B cell (primary cell): ENCODE measurements at regions of chr6 and their contacts with region 1.

Region 1: GRCh38 chr6:6588064-6588923 is at the start of gene LY86:
- DNase-seq: peak; percentile 87
- ATAC-seq: peak; percentile 65
- H3K4me3 ChIP-seq: peak within 1 kb of the TSS; percentile 52 to 84 (median 81)
- H3K4me3 Mint-ChIP-seq: peak within 1 kb of the TSS; percentile 98
- H3K27ac ChIP-seq: peak within 1 kb of the TSS; percentile 88 to 91
- H3K27ac Mint-ChIP-seq: peak within 1 kb of the TSS; percentile 99
- H3K4me1 ChIP-seq: peaks cover 83 to 85% of the 10 kb centered on the region in 2 donors
- H3K4me1 Mint-ChIP-seq: peaks cover 93% of the 10 kb centered on the region
- H3K27me3 ChIP-seq: no peaks in the 10 kb centered on the region
- H3K27me3 Mint-ChIP-seq: no peaks in the 10 kb centered on the region
- CTCF ChIP-seq: peak; percentile 16
- total RNA-seq, gene LY86: 68.7 and 76.7 TPM in 2 replicates

Region 2: GRCh38 chr6:5723841-5724691 is 864.2 kb before region 1 on chr6:
- CTCF ChIA-PET with region 1: no interaction called
- POLR2A ChIA-PET with region 1: no interaction called
- intact Hi-C with region 1: loop called (anchors 10 kb)
- DNase-seq: peak; percentile 92
- ATAC-seq: peak; percentile 89
- H3K4me3 ChIP-seq: peak overlapping the region; percentile 56 to 79 (median 75)
- H3K4me3 Mint-ChIP-seq: peak overlapping the region; percentile 99
- H3K27ac ChIP-seq: peak overlapping the region; percentile 98 to 99
- H3K27ac Mint-ChIP-seq: peak overlapping the region; percentile 100
- H3K4me1 ChIP-seq: peaks cover 59 to 75% of the 10 kb centered on the region in 2 donors
- H3K4me1 Mint-ChIP-seq: peaks cover 76% of the 10 kb centered on the region
- H3K27me3 ChIP-seq: no peaks in the 10 kb centered on the region
- H3K27me3 Mint-ChIP-seq: no peaks in the 10 kb centered on the region
- CTCF ChIP-seq: no peak

Region 3: GRCh38 chr6:6390849-6391602 is 197.3 kb before region 1 on chr6:
- CTCF ChIA-PET with region 1: interaction called, 3 read pairs
- POLR2A ChIA-PET with region 1: interaction called, 6 read pairs
- intact Hi-C with region 1: loop called (anchors 1 kb)
- DNase-seq: peak; percentile 81
- ATAC-seq: peak; percentile 75
- H3K4me3 ChIP-seq: peak overlapping the region in 3 of 5 experiments; percentile 3 to 36 (median 26)
- H3K4me3 Mint-ChIP-seq: peak overlapping the region; percentile 87
- H3K27ac ChIP-seq: peak overlapping the region; percentile 83 to 92
- H3K27ac Mint-ChIP-seq: peak overlapping the region; percentile 97
- H3K4me1 ChIP-seq: peaks cover 37 to 44% of the 10 kb centered on the region in 2 donors
- H3K4me1 Mint-ChIP-seq: peaks cover 58% of the 10 kb centered on the region
- H3K27me3 ChIP-seq: no peaks in the 10 kb centered on the region
- H3K27me3 Mint-ChIP-seq: peaks cover 3% of the 10 kb centered on the region
- CTCF ChIP-seq: no peak

Region 4: DNA sequence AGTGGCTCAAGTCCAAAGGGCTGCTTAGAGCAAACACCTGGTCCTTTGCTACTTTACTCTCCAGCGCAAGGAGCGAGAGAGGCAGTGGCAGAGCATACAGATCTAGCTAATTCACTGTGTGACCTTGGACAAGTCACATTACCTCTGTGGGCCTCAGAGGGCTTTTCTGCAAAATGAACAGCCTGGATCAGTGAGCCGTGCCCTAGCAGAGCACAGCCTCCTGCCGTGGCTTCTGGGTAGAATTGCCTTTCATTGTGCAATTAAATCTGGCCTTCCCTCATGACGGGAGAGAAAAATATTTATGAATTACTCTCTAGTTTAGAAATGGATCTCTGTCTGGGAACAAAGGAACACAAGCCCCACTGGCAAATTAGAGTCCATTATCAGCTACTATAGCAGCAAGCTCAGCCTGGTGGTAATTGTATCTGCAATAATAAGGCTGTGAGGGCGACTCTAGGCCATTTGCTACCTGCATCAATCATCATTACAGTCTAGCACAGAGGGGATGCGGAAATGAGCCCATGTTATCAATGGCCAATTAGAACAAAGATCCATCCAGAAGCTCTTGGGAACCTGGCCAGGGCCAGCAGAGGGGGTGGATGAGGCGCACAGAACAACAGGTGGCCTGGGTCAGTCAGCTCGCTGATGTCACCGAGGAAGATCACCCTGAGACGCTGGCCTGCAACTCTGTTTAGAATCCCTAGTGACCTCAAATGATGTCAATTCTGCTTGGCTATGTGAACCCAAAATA is 113.9 kb before region 1 on chr6:
- CTCF ChIA-PET with region 1: no interaction called
- POLR2A ChIA-PET with region 1: no interaction called
- intact Hi-C with region 1: no loop called
- DNase-seq: no peak
- ATAC-seq: no peak
- H3K4me3 ChIP-seq: no peak overlapping the region
- H3K4me3 Mint-ChIP-seq: no peak overlapping the region
- H3K27ac ChIP-seq: no peak overlapping the region
- H3K27ac Mint-ChIP-seq: no peak overlapping the region
- H3K4me1 ChIP-seq: no peaks in the 10 kb centered on the region
- H3K4me1 Mint-ChIP-seq: no peaks in the 10 kb centered on the region
- H3K27me3 ChIP-seq: no peaks in the 10 kb centered on the region
- H3K27me3 Mint-ChIP-seq: peaks cover 7% of the 10 kb centered on the region
- CTCF ChIP-seq: no peak

Region 5: GRCh38 chr6:6556738-6557505 is 31.4 kb before region 1 on chr6:
- CTCF ChIA-PET with region 1: interaction called, 171 read pairs
- POLR2A ChIA-PET with region 1: no interaction called
- intact Hi-C with region 1: loop called (anchors 1 kb)
- DNase-seq: peak; percentile 70
- ATAC-seq: peak; percentile 76
- H3K4me3 ChIP-seq: no peak overlapping the region
- H3K4me3 Mint-ChIP-seq: no peak overlapping the region
- H3K27ac ChIP-seq: no peak overlapping the region
- H3K27ac Mint-ChIP-seq: no peak overlapping the region
- H3K4me1 ChIP-seq: no peaks in the 10 kb centered on the region
- H3K4me1 Mint-ChIP-seq: no peaks in the 10 kb centered on the region
- H3K27me3 ChIP-seq: no peaks in the 10 kb centered on the region
- H3K27me3 Mint-ChIP-seq: no peaks in the 10 kb centered on the region
- CTCF ChIP-seq: peak; percentile 94

Region 6: GRCh38 chr6:6622501-6622900 is 34.2 kb after region 1 on chr6:
- CTCF ChIA-PET with region 1: interaction called, 3 read pairs
- POLR2A ChIA-PET with region 1: interaction called, 3 read pairs
- intact Hi-C with region 1: loop called (anchors 5 kb)
- DNase-seq: no peak
- ATAC-seq: no peak
- H3K4me3 ChIP-seq: no peak overlapping the region
- H3K4me3 Mint-ChIP-seq: no peak overlapping the region
- H3K27ac ChIP-seq: no peak overlapping the region
- H3K27ac Mint-ChIP-seq: no peak overlapping the region
- H3K4me1 ChIP-seq: peaks cover 17 to 25% of the 10 kb centered on the region in 2 donors
- H3K4me1 Mint-ChIP-seq: peaks cover 68% of the 10 kb centered on the region
- H3K27me3 ChIP-seq: no peaks in the 10 kb centered on the region
- H3K27me3 Mint-ChIP-seq: no peaks in the 10 kb centered on the region
- CTCF ChIP-seq: no peak

Region 7: DNA sequence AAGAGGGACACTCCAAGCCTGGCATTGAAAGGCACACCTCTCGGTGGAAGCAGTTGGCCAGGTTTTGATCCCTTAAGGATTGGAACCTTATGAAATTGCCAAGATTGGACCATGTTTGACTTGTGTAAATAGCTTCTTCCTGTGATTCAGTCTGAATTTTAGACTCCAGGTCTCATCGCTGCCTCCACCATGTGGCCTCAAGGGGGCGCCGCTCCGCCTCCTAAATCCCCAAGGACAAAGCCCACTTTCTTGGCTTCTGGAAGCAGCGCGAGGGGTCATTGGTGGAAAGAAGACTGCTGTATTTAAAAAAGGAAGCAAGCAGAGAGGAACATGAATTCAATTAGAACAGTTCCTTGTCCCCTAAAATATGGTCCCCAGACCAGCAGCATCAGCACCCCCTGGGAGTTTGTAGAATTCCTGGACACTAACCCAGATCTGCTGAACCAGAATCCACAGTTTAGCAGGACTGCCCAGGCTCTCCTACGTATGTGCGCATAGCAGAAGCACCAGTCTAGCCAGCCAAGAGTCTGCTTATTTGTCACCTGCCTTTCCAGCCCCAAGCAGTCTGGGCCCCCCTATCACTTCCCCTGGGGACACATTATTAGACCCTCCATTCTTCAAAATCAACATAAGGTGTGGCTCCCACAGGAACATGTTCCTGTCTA is 108.7 kb after region 1 on chr6:
- CTCF ChIA-PET with region 1: no interaction called
- POLR2A ChIA-PET with region 1: no interaction called
- intact Hi-C with region 1: no loop called
- DNase-seq: peak; percentile 31
- ATAC-seq: no peak
- H3K4me3 ChIP-seq: no peak overlapping the region
- H3K4me3 Mint-ChIP-seq: no peak overlapping the region
- H3K27ac ChIP-seq: no peak overlapping the region
- H3K27ac Mint-ChIP-seq: no peak overlapping the region
- H3K4me1 ChIP-seq: no peaks in the 10 kb centered on the region
- H3K4me1 Mint-ChIP-seq: no peaks in the 10 kb centered on the region
- H3K27me3 ChIP-seq: peaks cover 0 to 5% (median 0%) of the 10 kb centered on the region in 4 experiments
- H3K27me3 Mint-ChIP-seq: peaks cover 36% of the 10 kb centered on the region
- CTCF ChIP-seq: peak; percentile 35

Region 8: DNA sequence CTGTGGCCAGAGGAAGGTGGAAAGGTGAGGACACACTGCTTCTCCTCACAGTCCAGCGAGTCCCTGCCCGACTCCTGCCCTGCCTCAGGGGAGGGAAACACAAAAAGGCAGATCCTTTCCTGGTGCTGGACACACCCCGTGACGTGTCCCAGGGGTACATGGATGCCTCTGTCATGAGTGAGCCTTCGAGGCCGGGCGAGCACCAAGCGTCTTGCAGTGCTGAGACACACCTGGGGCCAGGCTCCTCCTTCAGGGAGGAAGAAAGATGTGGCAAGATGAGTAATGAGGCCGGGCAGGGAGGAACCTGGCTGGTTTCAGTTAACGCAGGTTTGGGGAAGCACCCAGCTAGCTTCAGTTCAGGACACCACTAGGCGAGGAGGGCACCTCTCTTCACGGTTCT is 215.3 kb after region 1 on chr6:
- CTCF ChIA-PET with region 1: no interaction called
- POLR2A ChIA-PET with region 1: no interaction called
- intact Hi-C with region 1: loop called (anchors 10 kb)
- DNase-seq: peak; percentile 84
- ATAC-seq: peak; percentile 90
- H3K4me3 ChIP-seq: no peak overlapping the region
- H3K4me3 Mint-ChIP-seq: peak overlapping the region; percentile 18
- H3K27ac ChIP-seq: no peak overlapping the region
- H3K27ac Mint-ChIP-seq: peak overlapping the region; percentile 73
- H3K4me1 ChIP-seq: peaks cover 41 to 64% of the 10 kb centered on the region in 2 donors
- H3K4me1 Mint-ChIP-seq: peaks cover 63% of the 10 kb centered on the region
- H3K27me3 ChIP-seq: no peaks in the 10 kb centered on the region
- H3K27me3 Mint-ChIP-seq: peaks cover 5% of the 10 kb centered on the region
- CTCF ChIP-seq: no peak